ENCODE measurements at regions of chr4 and their contacts with region 1.

Region 1: DNA sequence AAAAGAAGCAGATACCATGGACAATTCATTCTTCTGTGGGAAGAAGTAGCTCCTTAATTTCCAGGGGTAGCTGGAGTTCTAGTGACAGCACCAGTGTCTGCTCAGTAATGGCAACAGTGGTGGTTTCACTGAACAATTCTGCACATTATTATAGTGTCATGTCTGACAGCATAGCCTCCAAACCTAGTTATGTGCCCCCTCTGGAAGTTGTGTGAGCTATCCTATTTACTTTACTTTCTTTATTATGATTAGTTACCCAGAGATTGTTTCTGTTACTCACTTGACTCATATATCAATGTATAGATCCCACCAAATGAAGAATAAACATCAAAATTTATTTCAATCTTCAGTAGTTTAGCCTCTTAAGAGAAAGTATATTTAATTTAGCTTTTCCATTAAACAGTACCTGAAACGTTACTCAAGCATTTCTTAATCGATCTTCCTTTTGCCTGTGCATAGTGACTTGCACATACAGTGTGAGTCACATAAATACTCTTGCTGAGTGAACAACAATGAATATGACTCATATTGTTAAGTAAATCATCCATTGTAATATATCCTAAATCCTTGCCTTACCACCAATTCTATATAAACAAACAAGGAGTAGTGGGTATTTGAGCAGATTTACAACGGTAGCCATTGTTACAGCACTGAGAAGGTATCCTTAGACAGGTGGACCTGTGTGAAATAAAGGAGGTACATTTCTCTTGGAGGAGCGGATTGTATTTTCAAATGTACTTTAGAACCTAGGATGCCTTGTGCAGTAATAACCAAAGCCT is 534.7 kb downstream of the ANKRD50 start:
- DNase-seq: no peak
- H3K4me3 ChIP-seq: no peak overlapping the region
- H3K27ac ChIP-seq: no peak overlapping the region
- H3K4me1 ChIP-seq: no peaks in the 10 kb centered on the region
- H3K27me3 ChIP-seq: no peaks in the 10 kb centered on the region
- CTCF ChIP-seq: no peak
- POLR2A ChIP-seq: no peak

Region 2: DNA sequence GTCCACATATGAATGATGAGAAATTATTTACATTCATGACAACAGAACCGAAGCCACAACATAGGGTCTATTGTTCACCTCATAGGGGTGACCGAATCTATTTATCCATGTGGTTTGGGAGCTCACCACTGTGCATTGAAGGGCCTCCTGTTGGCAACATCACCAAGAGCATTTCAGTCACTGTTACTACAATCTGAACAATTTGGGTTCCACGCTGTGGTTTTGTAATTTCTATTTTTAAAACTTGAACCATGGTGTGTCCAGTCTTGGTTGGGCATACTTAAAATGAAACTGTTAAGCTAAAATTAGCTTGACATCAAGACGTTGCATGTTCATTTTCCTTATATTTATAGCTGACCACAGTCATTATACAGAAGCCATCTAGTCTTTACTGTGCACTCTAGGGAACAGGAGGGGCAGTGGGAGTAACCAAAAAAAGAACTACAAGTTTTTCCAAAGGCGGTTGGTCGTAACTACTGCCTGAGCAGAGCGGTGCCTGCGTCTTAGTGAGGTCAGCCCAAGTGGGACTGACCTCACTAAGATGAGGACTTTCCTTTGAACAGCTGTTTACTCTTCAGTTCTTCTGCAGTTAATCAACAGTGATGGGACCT is 589.1 kb before region 1 on chr4:
- intact Hi-C with region 1: loop called (anchors 5 kb)
- DNase-seq: no peak
- H3K4me3 ChIP-seq: no peak overlapping the region
- H3K27ac ChIP-seq: peak overlapping the region in 1 of 2 donors; percentile 44
- H3K4me1 ChIP-seq: no peaks in the 10 kb centered on the region
- H3K27me3 ChIP-seq: no peaks in the 10 kb centered on the region
- CTCF ChIP-seq: no peak
- POLR2A ChIP-seq: no peak

Region 3: DNA sequence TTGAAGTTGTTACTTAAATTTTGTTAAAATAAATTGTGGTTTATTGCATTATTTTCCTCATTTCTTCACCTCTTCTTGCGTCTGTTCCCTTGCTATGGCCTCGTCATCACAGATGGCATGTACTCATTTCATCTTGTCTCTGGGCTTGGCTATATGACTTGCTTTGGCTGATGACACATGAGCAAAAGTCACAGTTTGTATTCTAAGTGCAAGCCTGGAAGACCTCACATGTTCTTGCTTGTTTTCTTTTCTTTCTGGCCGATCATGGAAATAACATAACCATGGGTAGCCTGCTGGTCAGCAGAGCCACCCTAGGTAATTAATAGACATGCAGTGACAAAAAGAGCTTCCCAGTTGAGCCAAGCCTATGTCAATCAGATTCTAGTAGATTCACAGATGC is 253.3 kb before region 1 on chr4:
- intact Hi-C with region 1: no loop called
- DNase-seq: no peak
- H3K4me3 ChIP-seq: no peak overlapping the region
- H3K27ac ChIP-seq: no peak overlapping the region
- H3K4me1 ChIP-seq: no peaks in the 10 kb centered on the region
- H3K27me3 ChIP-seq: no peaks in the 10 kb centered on the region
- CTCF ChIP-seq: no peak
- POLR2A ChIP-seq: no peak

Region 4: GRCh38 chr4:124224256-124224655 is 46.4 kb after region 1 on chr4:
- intact Hi-C with region 1: no loop called
- DNase-seq: no peak
- H3K4me3 ChIP-seq: no peak overlapping the region
- H3K27ac ChIP-seq: no peak overlapping the region
- H3K4me1 ChIP-seq: no peaks in the 10 kb centered on the region
- H3K27me3 ChIP-seq: no peaks in the 10 kb centered on the region
- CTCF ChIP-seq: no peak
- POLR2A ChIP-seq: no peak

Region 5: GRCh38 chr4:124573076-124573475 is 395.2 kb after region 1 on chr4:
- intact Hi-C with region 1: no loop called
- DNase-seq: no peak
- H3K4me3 ChIP-seq: no peak overlapping the region
- H3K27ac ChIP-seq: no peak overlapping the region
- H3K4me1 ChIP-seq: no peaks in the 10 kb centered on the region
- H3K27me3 ChIP-seq: no peaks in the 10 kb centered on the region
- CTCF ChIP-seq: no peak
- POLR2A ChIP-seq: no peak